Activated CD4-positive, alpha-beta memory T cell treated with anti-CD3 and anti-CD28 coated beads for 36 hours (primary cell): ENCODE measurements at regions of chr4 and their contacts with region 1.

Region 1: DNA sequence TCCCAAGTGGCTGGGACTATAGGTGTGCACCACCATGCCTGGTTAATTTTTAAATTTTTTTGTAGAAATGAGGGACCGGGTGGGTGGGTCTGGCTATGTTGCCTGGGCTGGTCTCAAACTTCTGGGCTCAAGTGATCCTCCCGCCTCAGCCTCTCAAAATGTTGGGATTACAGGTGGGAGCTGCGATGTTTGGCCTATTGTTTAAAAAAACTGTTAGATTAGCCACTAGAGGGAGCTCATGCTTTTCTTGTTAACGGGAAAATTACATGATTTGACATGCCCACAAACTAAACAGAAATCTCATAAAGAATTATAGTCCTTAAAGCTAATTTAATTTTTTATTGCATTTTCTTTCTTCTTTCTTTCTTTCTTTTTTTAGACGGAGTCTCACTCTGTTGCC is 5.0 kb upstream of the SDAD1 start:
- DNase-seq: no peak
- H3K4me3 Mint-ChIP-seq: no peak overlapping the region
- H3K27ac Mint-ChIP-seq: no peak overlapping the region
- H3K4me1 Mint-ChIP-seq: peaks cover 6% of the 10 kb centered on the region
- H3K27me3 Mint-ChIP-seq: peaks cover 3% of the 10 kb centered on the region

Region 2: DNA sequence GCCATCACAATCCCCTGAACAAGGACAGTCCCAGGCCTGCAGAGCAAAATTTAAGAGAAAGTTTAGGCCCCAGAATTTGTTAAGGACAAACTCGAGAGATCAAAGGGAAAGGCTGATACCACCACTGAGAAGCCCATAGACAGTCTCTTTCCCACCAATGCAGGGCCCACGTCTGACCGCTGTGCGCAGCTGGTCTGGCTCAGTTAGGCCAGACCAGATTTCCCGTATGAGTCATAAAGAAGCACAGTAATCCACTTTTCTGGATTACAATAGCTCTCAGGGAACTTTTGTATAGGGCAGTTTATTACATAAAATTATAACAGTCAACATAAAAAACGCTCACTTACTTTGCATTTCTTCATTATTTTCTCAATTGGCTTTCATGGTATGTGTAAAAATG is 741.0 kb before region 1 on chr4:
- CTCF ChIA-PET with region 1: no interaction called
- POLR2A ChIA-PET with region 1: no interaction called
- intact Hi-C with region 1: no loop called
- DNase-seq: no peak
- H3K4me3 Mint-ChIP-seq: no peak overlapping the region
- H3K27ac Mint-ChIP-seq: no peak overlapping the region
- H3K4me1 Mint-ChIP-seq: no peaks in the 10 kb centered on the region
- H3K27me3 Mint-ChIP-seq: no peaks in the 10 kb centered on the region

Region 3: DNA sequence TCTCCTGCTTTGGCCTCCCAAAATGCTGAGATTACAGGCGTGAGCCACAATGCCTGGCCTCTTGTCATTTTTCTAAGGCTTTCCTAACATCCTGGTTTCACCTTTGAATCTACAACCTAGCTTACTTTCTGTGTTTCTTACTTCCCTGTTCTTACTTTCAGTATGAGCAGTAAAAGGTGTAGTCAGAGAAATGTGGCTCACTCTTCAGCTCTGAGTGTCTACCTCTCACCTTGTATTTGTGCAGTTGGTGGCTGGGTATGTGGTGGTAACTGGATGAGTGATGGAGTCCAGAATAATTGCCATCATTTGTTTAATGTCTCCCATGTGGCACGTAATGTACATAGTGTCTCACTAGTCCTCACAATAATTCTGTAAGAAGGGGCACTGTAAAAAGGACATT is 59.3 kb after region 1 on chr4:
- CTCF ChIA-PET with region 1: interaction called, 38 read pairs
- POLR2A ChIA-PET with region 1: interaction called, 4 read pairs
- intact Hi-C with region 1: loop called (anchors 2 kb)
- DNase-seq: peak; percentile 56
- H3K4me3 Mint-ChIP-seq: no peak overlapping the region
- H3K27ac Mint-ChIP-seq: peak overlapping the region; percentile 49
- H3K4me1 Mint-ChIP-seq: peaks cover 41% of the 10 kb centered on the region
- H3K27me3 Mint-ChIP-seq: peaks cover 18% of the 10 kb centered on the region

Region 4: DNA sequence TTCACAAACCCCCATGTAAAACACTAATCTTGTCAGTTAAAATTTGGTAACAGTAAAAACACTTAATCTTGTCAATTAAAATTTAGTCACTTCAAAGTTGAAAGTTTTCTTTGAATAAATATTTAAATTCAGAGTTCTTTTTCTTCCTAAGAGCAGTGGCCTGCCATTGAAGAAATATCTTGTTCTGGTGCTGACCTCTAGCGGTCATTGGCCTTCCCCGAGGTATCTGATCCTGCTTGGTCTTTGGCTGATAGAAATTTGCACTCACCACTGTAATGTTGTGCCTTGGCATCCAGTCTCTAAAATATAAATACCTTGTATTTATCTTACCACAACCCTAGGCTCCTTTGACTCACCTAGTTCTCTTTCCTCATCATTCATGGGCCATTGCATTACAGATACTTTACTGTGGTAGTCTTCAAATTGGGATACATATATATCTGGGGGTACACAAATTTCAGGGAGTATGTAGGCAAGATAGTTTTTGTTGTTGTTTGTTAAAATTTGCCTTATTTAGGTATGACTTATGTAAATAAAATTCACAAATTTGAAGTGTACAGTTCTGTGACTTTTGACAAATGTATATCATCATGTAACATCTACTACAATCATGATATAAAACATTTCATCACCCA is 72.0 kb after region 1 on chr4:
- CTCF ChIA-PET with region 1: interaction called, 93 read pairs
- POLR2A ChIA-PET with region 1: no interaction called
- intact Hi-C with region 1: loop called (anchors 1 kb)
- DNase-seq: peak; percentile 79
- H3K4me3 Mint-ChIP-seq: no peak overlapping the region
- H3K27ac Mint-ChIP-seq: no peak overlapping the region
- H3K4me1 Mint-ChIP-seq: no peaks in the 10 kb centered on the region
- H3K27me3 Mint-ChIP-seq: no peaks in the 10 kb centered on the region

Region 5: GRCh38 chr4:76087007-76087769 is 91.5 kb after region 1 on chr4:
- CTCF ChIA-PET with region 1: interaction called, 29 read pairs
- POLR2A ChIA-PET with region 1: no interaction called
- intact Hi-C with region 1: no loop called
- DNase-seq: peak; percentile 31
- H3K4me3 Mint-ChIP-seq: no peak overlapping the region
- H3K27ac Mint-ChIP-seq: no peak overlapping the region
- H3K4me1 Mint-ChIP-seq: peaks cover 4% of the 10 kb centered on the region
- H3K27me3 Mint-ChIP-seq: peaks cover 2% of the 10 kb centered on the region